Breast epithelium (tissue), 4 donors: ENCODE measurements at regions of chr3 and their contacts with region 1.

Region 1: DNA sequence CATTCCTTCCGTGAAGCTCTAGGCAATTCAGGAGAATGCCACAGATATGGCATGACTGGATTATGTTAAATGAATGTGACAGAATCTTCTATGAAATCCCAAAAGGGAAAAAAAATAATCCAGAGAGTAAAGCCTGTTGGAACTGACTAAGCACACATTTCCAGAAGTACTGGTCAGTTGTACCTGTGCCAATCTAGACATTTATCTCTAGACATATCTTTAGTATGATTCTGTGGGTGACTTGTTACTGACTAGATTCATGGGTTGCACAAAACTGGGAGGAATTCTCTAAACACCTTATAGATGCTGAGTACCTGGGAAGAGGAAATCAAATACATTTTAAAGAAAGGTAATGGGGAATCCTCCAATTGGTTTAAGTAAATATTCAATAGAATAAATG is 31.5 kb upstream of the CADPS start:
- DNase-seq: no peak
- H3K4me3 ChIP-seq: no peak overlapping the region
- H3K27ac ChIP-seq: no peak overlapping the region
- H3K4me1 ChIP-seq: no peaks in the 10 kb centered on the region
- H3K27me3 ChIP-seq: no peaks in the 10 kb centered on the region
- CTCF ChIP-seq: no peak
- POLR2A ChIP-seq: no peak

Region 2: DNA sequence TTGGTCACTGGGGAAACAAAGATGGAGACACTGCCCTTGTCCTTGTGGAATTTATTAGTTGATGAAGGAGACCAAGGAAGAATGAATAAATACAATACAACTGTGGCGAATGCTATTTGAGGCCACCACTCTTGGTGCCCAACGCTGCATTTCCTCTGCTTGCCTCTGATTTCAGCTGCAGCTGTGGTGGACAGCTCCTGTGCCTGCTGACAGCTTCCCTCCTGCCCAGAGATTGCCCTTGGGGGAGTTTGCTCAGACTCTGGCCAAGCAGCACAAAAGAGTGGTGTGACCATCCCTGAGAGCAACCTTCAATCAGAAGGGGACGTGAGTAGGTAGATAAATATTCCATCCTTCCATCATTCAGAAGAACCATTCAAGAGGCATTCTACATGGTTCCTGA is 1590.8 kb before region 1 on chr3:
- intact Hi-C with region 1: loop called (anchors 10 kb)
- DNase-seq: no peak
- H3K4me3 ChIP-seq: no peak overlapping the region
- H3K27ac ChIP-seq: no peak overlapping the region
- H3K4me1 ChIP-seq: no peaks in the 10 kb centered on the region
- H3K27me3 ChIP-seq: no peaks in the 10 kb centered on the region
- CTCF ChIP-seq: no peak
- POLR2A ChIP-seq: no peak

Region 3: DNA sequence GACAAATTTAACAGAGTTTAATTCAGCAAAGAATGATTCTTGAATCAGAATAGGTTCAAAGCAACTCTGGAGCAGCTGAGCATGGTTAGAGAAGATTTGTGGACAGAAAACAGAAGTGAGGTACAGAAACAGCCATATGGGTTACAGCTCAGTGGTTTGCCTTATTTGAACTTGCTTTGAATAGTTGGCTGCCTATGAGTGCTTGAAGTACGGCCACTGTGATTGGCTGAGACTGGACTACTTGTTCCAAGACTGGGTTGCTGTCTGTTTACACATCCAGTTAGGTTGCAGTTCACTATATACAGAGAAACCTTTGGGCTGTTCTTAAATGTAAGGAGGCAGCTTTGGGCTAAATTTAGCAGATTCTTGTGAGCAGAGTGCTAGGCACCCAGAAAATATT is 47.9 kb after region 1 on chr3:
- intact Hi-C with region 1: no loop called
- DNase-seq: no peak
- H3K4me3 ChIP-seq: no peak overlapping the region
- H3K27ac ChIP-seq: no peak overlapping the region
- H3K4me1 ChIP-seq: no peaks in the 10 kb centered on the region
- H3K27me3 ChIP-seq: no peaks in the 10 kb centered on the region
- CTCF ChIP-seq: no peak
- POLR2A ChIP-seq: no peak